Right ventricle myocardium inferior (tissue), 1 donor: ENCODE measurements at regions of chr6 and their contacts with region 1.

Region 1: GRCh38 chr6:131807644-131808459 is at the start of gene ENPP1:
- DNase-seq: peak; percentile 84
- ATAC-seq: peak; percentile 94
- total RNA-seq, gene ENPP1: 1.7 TPM

Region 2: GRCh38 chr6:130965656-130966055 is 842.2 kb before region 1 on chr6:
- intact Hi-C with region 1: no loop called
- DNase-seq: no peak
- ATAC-seq: no peak

Region 3: DNA sequence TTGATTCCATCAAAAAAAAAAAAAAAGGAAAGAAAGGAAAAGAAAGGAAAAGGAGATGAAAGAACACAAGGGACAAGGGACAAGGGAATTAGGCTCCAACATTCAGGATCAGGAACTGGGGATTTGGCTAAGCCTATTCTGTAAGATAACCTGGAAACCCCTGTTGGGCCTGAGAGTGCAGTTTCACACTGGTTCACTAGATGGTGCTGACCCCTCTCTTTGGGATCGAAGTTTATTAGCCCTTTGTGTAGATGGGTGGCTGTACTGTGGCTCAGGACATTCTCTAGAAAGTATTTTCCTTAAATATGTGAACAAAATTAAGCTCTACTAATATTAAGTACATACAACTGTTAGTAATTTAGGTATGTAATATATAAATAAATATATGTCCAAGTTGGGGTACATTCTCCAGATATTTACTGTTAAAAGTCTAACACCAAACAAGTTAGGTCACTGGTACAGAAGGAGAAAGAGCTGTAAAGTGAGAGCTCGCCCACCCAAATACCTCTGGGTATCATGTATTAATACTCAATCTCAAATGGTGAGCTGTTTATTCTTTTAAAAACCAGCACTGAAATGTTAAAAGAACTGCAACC is 112.9 kb before region 1 on chr6:
- intact Hi-C with region 1: loop called (anchors 10 kb)
- DNase-seq: no peak
- ATAC-seq: peak; percentile 75

Region 4: GRCh38 chr6:131819572-131820124 is 11.8 kb after region 1 on chr6:
- intact Hi-C with region 1: loop called (anchors 1 kb)
- DNase-seq: no peak
- ATAC-seq: peak; percentile 59

Region 5: DNA sequence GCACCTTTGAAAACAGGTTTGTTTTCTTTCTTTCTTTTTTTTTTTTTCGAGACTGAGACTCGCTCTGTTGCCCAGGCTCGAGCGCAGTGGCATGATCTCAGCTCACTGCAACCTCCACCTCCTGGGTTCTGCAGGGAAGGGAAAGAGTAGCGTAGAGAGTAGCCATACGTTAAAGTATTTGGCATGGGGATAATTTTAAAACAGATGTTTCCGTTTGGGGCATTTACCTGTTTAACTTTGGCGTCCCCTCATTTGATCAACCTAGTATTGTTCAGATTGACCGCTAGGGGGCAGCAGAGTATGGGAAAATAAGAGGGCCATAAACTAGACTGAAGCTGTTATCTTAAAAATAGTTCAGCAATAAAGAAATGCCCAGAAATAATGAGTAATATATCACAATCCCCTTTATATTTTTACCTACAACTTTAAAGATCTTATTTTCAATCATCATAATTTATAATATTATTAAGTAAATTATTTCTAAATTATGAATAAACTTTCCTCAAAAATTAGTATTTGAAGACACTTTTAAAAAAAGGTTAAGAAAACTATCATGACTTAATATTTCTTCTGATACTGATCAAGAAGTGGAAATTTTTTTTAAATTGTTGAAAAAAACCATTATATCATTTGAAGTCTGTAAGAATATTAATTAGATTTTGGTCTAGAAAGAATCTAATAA is 722.6 kb after region 1 on chr6:
- intact Hi-C with region 1: no loop called
- DNase-seq: no peak
- ATAC-seq: peak; percentile 62